K562 (cell line): ENCODE measurements at regions of chr2 and their contacts with region 1.

Region 1: DNA sequence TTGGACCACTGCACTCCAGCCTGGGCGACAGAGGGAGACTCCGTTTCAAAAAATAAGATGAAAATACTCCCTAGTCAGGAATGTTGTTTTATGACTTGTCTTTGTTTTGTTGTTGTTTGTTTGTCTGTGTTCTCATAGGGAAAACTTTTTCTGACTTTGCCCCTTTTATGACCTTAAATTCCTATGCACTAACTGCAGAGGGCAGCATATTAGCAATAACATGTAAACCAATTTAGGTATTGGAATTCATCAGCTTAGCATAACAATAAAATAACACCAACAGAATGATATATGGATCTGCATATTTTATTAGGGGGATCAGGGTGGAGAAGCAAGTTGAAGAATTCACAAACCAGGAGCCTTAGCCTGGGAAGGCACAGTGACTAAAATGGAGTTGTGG is 631.5 kb downstream of the SUCLG1 start:
- DNase-seq: peak in 1 of 4 experiments; percentile 5
- ATAC-seq: no peak
- H3K4me3 ChIP-seq: no peak overlapping the region
- H3K27ac ChIP-seq: no peak overlapping the region
- H3K4me1 ChIP-seq: no peaks in the 10 kb centered on the region; a peak in 1 of 5 replicates
- H3K27me3 ChIP-seq: no peaks in the 10 kb centered on the region
- CTCF ChIP-seq: peak; percentile 31 to 56 (median 34); a peak in 4 of 6 replicates
- EP300 ChIP-seq: no peak
- POLR2A ChIP-seq: no peak
- RAD21 ChIP-seq: peak; percentile 17 to 44; a peak in 2 of 4 replicates

Region 2: GRCh38 chr2:83837823-83838222 is 10.2 kb after region 1 on chr2:
- CTCF ChIA-PET with region 1: no interaction called
- POLR2A ChIA-PET with region 1: no interaction called
- in situ Hi-C with region 1: no loop called
- intact Hi-C with region 1: no loop called
- DNase-seq: no peak
- ATAC-seq: no peak
- H3K4me3 ChIP-seq: no peak overlapping the region
- H3K27ac ChIP-seq: no peak overlapping the region
- H3K4me1 ChIP-seq: no peaks in the 10 kb centered on the region; a peak in 1 of 5 replicates
- H3K27me3 ChIP-seq: no peaks in the 10 kb centered on the region
- CTCF ChIP-seq: no peak
- EP300 ChIP-seq: no peak
- POLR2A ChIP-seq: no peak
- RAD21 ChIP-seq: no peak

Region 3: GRCh38 chr2:84297155-84297554 is 469.5 kb after region 1 on chr2:
- CTCF ChIA-PET with region 1: no interaction called
- POLR2A ChIA-PET with region 1: no interaction called
- in situ Hi-C with region 1: loop called (anchors 10 kb)
- intact Hi-C with region 1: no loop called
- DNase-seq: no peak
- ATAC-seq: no peak
- H3K4me3 ChIP-seq: no peak overlapping the region
- H3K27ac ChIP-seq: no peak overlapping the region
- H3K4me1 ChIP-seq: no peaks in the 10 kb centered on the region
- H3K27me3 ChIP-seq: no peaks in the 10 kb centered on the region
- CTCF ChIP-seq: no peak
- EP300 ChIP-seq: no peak
- POLR2A ChIP-seq: no peak
- RAD21 ChIP-seq: no peak